CD8-positive, alpha-beta T cell (primary cell): ENCODE measurements at regions of chr2 and their contacts with region 1.

Region 1: DNA sequence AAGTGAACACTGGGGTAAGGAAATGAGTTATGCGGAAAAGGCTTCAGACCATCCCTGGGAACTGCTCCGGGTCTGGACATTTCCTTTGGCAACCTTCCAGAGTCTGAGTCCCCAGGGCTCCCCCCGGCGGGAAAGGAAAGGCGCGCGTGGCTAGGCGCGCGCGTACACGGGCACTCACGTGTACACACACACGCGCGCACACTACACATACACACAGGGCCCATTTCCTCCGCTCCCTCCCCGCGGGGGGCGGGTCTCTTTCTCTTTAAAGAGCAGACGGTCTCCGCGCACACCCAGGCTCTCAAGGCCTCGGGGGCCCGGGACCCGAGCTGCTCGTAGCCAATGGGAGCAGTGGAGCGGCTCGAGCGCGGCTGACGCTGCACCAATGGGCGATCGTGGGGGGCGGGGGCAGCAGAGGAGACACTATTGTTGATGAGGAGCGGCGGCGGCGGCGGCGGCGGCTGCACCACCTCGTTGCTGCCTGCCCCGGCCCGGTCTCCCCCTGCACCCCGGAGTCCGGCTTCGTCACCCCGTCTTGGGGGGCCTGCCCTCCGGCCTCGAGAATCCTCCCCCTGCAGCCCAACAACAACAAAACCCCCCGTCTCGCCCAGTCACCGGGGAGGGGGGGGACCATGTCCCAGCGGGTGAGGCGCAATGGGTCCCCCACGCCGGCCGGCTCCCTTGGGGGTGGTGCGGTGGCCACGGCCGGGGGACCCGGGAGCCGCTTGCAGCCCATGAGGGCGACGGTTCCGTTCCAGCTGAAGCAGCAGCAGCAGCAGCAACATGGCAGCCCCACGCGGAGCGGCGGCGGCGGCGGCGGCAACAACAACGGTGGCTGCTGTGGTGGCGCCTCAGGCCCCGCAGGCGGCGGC is at the start of gene FAM117B:
- DNase-seq: peak; percentile 97 to 99 (median 98)
- ATAC-seq: peak; percentile 87
- H3K4me3 ChIP-seq: peak within 1 kb of the TSS; percentile 77 to 87
- H3K4me3 Mint-ChIP-seq: peak within 1 kb of the TSS; percentile 98
- H3K27ac ChIP-seq: peak within 1 kb of the TSS; percentile 76 to 89
- H3K27ac Mint-ChIP-seq: peak within 1 kb of the TSS; percentile 99
- H3K4me1 ChIP-seq: peaks cover 29% of the 10 kb centered on the region
- H3K4me1 Mint-ChIP-seq: peaks cover 52% of the 10 kb centered on the region
- H3K27me3 ChIP-seq: no peaks in the 10 kb centered on the region
- H3K27me3 Mint-ChIP-seq: no peaks in the 10 kb centered on the region
- CTCF ChIP-seq: no peak
- total RNA-seq, gene FAM117B: 40.0 to 45.8 TPM

Region 2: GRCh38 chr2:202375609-202376408 is 259.0 kb before region 1 on chr2 and contains the start of gene BMPR2:
- CTCF ChIA-PET with region 1: no interaction called
- POLR2A ChIA-PET with region 1: no interaction called
- intact Hi-C with region 1: loop called (anchors 5 to 10 kb)
- DNase-seq: peak; percentile 63 to 90 (median 81)
- ATAC-seq: peak; percentile 77
- H3K4me3 ChIP-seq: peak within 1 kb of the TSS; percentile 61 to 100
- H3K4me3 Mint-ChIP-seq: peak within 1 kb of the TSS; percentile 99
- H3K27ac ChIP-seq: peak within 1 kb of the TSS; percentile 64 to 80
- H3K27ac Mint-ChIP-seq: peak within 1 kb of the TSS; percentile 93
- H3K4me1 ChIP-seq: peaks cover 23% of the 10 kb centered on the region
- H3K4me1 Mint-ChIP-seq: peaks cover 30% of the 10 kb centered on the region
- H3K27me3 ChIP-seq: no peaks in the 10 kb centered on the region
- H3K27me3 Mint-ChIP-seq: no peaks in the 10 kb centered on the region
- CTCF ChIP-seq: no peak
- total RNA-seq, gene BMPR2: 9.4 to 9.6 TPM

Region 3: DNA sequence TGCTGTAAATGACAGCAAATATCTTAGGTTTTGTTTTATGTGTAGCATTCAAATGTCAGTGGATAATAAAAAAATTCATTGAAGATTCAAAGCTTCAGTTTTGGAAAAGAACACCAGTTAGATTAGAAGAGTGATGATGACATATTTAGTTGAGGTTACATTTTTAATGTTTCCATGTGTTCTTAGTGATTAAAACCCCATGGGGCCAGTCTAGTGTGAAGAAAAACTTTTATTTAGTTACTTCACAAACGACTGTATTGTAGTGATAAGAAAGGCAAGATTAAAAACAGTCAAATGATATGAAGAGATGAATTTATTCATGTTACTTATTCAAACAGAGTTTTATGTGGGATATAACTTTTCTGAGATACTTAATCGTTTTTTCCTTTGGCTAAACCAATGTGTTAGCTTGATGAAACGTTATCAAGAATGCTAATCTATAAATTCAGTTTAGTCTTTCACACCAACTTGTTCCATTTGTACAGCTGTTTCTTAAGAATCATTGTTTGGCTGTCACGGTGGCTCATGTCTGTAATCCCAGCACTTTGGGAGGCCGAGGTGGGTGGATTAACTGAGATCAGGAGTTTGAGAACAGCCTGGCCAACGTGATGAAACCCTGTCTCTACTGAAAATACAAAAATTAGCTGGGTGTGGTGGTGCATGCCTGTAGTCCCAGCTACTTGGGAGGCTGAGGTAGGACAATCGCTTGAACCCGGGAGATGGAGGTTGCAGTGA is 247.0 kb before region 1 on chr2:
- CTCF ChIA-PET with region 1: no interaction called
- POLR2A ChIA-PET with region 1: no interaction called
- intact Hi-C with region 1: no loop called
- DNase-seq: no peak
- ATAC-seq: no peak
- H3K4me3 ChIP-seq: no peak overlapping the region
- H3K4me3 Mint-ChIP-seq: no peak overlapping the region
- H3K27ac ChIP-seq: no peak overlapping the region
- H3K27ac Mint-ChIP-seq: no peak overlapping the region
- H3K4me1 ChIP-seq: no peaks in the 10 kb centered on the region
- H3K4me1 Mint-ChIP-seq: peaks cover 18% of the 10 kb centered on the region
- H3K27me3 ChIP-seq: no peaks in the 10 kb centered on the region
- H3K27me3 Mint-ChIP-seq: no peaks in the 10 kb centered on the region
- CTCF ChIP-seq: no peak

Region 4: DNA sequence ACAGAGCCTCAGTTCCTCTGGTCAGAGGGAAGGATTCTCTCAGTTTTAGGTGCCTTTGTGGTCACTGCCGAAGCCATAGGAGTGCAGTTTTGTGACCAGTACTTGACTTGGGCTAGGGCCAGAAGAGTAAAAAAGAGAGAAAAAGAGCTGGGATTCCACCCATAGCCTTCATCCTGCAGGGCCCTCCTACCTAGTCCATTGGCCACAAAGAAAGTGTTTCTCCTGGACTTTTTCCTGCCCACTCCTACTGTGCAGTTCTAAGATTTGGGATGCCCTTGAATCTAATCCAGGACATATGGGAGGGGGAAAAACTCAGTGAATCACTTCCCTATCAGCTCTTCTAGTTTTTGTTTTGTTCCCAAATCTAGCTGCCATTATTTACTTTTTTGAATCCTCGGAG is 26.0 kb after region 1 on chr2:
- CTCF ChIA-PET with region 1: interaction called, 7 read pairs
- POLR2A ChIA-PET with region 1: interaction called, 13 read pairs
- intact Hi-C with region 1: no loop called
- DNase-seq: no peak
- ATAC-seq: no peak
- H3K4me3 ChIP-seq: no peak overlapping the region
- H3K4me3 Mint-ChIP-seq: no peak overlapping the region
- H3K27ac ChIP-seq: no peak overlapping the region
- H3K27ac Mint-ChIP-seq: peak overlapping the region; percentile 72
- H3K4me1 ChIP-seq: peaks cover 65% of the 10 kb centered on the region
- H3K4me1 Mint-ChIP-seq: peaks cover 78% of the 10 kb centered on the region
- H3K27me3 ChIP-seq: no peaks in the 10 kb centered on the region
- H3K27me3 Mint-ChIP-seq: no peaks in the 10 kb centered on the region
- CTCF ChIP-seq: no peak

Region 5: GRCh38 chr2:202762556-202762955 is 127.8 kb after region 1 on chr2:
- CTCF ChIA-PET with region 1: interaction called, 3 read pairs
- POLR2A ChIA-PET with region 1: interaction called, 5 read pairs
- intact Hi-C with region 1: loop called in 1 of 2 experiments (anchors 5 kb)
- DNase-seq: peak in 3 of 9 experiments; percentile 16 to 73 (median 45)
- ATAC-seq: peak; percentile 82
- H3K4me3 ChIP-seq: peak overlapping the region in 1 of 2 experiments; percentile 25
- H3K4me3 Mint-ChIP-seq: peak overlapping the region; percentile 62
- H3K27ac ChIP-seq: peak overlapping the region; percentile 31 to 33
- H3K27ac Mint-ChIP-seq: peak overlapping the region; percentile 91
- H3K4me1 ChIP-seq: peaks cover 68% of the 10 kb centered on the region
- H3K4me1 Mint-ChIP-seq: peaks cover 44% of the 10 kb centered on the region
- H3K27me3 ChIP-seq: no peaks in the 10 kb centered on the region
- H3K27me3 Mint-ChIP-seq: no peaks in the 10 kb centered on the region
- CTCF ChIP-seq: no peak

Region 6: GRCh38 chr2:202858575-202858974 is 223.8 kb after region 1 on chr2:
- CTCF ChIA-PET with region 1: no interaction called
- POLR2A ChIA-PET with region 1: no interaction called
- intact Hi-C with region 1: no loop called
- DNase-seq: no peak
- ATAC-seq: no peak
- H3K4me3 ChIP-seq: no peak overlapping the region
- H3K4me3 Mint-ChIP-seq: no peak overlapping the region
- H3K27ac ChIP-seq: no peak overlapping the region
- H3K27ac Mint-ChIP-seq: no peak overlapping the region
- H3K4me1 ChIP-seq: no peaks in the 10 kb centered on the region
- H3K4me1 Mint-ChIP-seq: no peaks in the 10 kb centered on the region
- H3K27me3 ChIP-seq: no peaks in the 10 kb centered on the region
- H3K27me3 Mint-ChIP-seq: no peaks in the 10 kb centered on the region
- CTCF ChIP-seq: no peak

Region 7: DNA sequence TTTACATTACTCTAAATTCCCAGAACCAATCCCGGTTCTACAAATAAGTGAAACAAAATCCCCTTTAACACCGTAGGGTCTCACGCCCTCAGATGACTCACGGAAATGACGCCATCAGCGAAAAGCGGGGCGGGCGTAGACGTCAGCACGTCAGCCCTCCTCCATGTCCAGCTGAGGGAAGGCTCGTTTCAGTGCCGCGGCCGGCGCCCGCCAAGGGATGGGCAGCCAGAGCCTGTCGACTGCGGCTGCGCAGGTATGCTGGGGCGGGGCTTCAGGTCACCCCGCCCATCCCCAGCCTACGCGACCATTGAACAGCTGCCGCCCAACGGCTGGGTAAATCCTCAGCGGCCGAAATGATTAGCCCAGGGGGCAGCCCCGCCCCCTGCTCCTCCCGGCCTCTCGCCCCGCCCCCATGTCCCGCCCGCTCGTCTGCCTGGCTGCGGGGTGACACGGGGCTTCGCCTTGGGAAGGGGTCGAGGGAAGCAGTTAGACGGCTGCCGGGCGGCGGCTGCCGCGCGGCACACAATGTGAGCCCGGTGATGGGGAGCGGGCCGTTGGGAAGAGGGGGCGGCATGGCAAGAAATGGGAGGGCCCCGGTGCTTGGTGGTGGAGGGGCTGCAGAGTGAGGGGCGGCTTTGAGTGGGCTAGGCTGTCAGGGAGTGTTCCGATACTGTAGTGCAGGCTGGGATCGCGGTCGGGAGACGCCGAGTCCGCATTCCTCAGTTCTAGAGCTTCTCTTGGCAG is 379.8 kb after region 1 on chr2 and contains the start of gene NBEAL1:
- CTCF ChIA-PET with region 1: no interaction called
- POLR2A ChIA-PET with region 1: no interaction called
- intact Hi-C with region 1: loop called (anchors 1 to 5 kb)
- DNase-seq: peak; percentile 92 to 99 (median 95)
- ATAC-seq: peak; percentile 90
- H3K4me3 ChIP-seq: peak within 1 kb of the TSS; percentile 77 to 97
- H3K4me3 Mint-ChIP-seq: peak within 1 kb of the TSS; percentile 88
- H3K27ac ChIP-seq: peak within 1 kb of the TSS; percentile 86 to 89
- H3K27ac Mint-ChIP-seq: peak within 1 kb of the TSS; percentile 92
- H3K4me1 ChIP-seq: peaks cover 37% of the 10 kb centered on the region
- H3K4me1 Mint-ChIP-seq: peaks cover 46% of the 10 kb centered on the region
- H3K27me3 ChIP-seq: no peaks in the 10 kb centered on the region
- H3K27me3 Mint-ChIP-seq: no peaks in the 10 kb centered on the region
- CTCF ChIP-seq: no peak
- total RNA-seq, gene NBEAL1: 11.2 to 13.2 TPM